Mammary epithelial cell (primary cell): ENCODE measurements at regions of chr3 and their contacts with region 1.

Region 1: GRCh38 chr3:197430934-197431333 is 124.8 kb downstream of the BDH1 start:
- DNase-seq: no peak
- H3K4me3 ChIP-seq: no peak overlapping the region
- H3K27ac ChIP-seq: no peak overlapping the region
- H3K4me1 ChIP-seq: no peaks in the 10 kb centered on the region
- H3K27me3 ChIP-seq: no peaks in the 10 kb centered on the region
- CTCF ChIP-seq: no peak

Region 2: GRCh38 chr3:197406266-197406665 is 24.7 kb before region 1 on chr3:
- CTCF ChIA-PET with region 1: no interaction called
- dilution Hi-C with region 1: no loop called
- in situ Hi-C with region 1: no loop called
- intact Hi-C with region 1: loop called (anchors 1 kb)
- DNase-seq: no peak
- H3K4me3 ChIP-seq: no peak overlapping the region
- H3K27ac ChIP-seq: no peak overlapping the region
- H3K4me1 ChIP-seq: no peaks in the 10 kb centered on the region
- H3K27me3 ChIP-seq: no peaks in the 10 kb centered on the region
- CTCF ChIP-seq: no peak